SK-N-SH (cell line): ENCODE measurements at regions of chr1 and their contacts with region 1.

Region 1: DNA sequence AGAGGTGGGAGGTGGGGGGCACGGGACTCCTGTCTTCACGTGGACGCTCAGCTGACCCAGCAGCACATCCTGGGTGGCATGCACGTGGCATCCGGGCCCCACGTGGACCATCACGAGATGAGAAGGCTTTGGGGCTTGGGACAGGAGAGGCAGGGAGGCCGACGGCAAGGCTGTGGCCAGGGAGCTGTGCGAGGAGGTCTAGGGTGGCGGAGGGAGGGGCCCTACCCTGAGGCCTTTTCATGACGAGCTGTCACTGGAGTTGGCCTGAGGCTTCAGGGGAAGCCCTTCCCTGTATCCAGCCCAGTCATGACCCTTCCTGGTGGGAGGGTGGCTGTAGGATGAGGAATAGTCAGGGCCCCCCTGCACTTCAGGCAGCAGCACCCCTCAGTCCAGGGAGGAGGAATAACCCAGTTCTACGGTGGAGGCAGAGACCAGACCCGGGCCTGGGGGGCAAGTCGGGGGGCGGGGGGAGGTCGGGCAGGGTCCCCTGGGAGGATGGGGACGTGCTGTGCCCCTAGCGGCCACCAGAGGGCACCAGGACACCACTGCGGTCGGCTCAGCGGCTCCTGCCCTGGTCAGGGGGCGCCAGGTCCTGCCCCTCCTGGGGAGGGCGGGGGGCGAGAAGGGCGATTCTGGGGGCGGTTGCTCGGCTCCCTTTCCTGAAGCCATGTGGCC is 2.0 kb upstream of the PERM1 start:
- DNase-seq: peak; percentile 92
- H3K4me3 ChIP-seq: peak overlapping the region in 1 of 2 experiments; percentile 32; a peak in 1 of 4 replicates
- H3K27ac ChIP-seq: no peak overlapping the region
- H3K4me1 ChIP-seq: peaks cover 0 to 9% of the 10 kb centered on the region in 2 experiments; a peak in 1 of 4 replicates
- H3K27me3 ChIP-seq: peaks cover 30% of the 10 kb centered on the region; the same call in 1 of the 2 replicates
- CTCF ChIP-seq: peak; percentile 76
- EP300 ChIP-seq: no peak
- RAD21 ChIP-seq: peak; percentile 71

Region 2: GRCh38 chr1:912740-913301 is 71.1 kb before region 1 on chr1:
- CTCF ChIA-PET with region 1: no interaction called
- POLR2A ChIA-PET with region 1: no interaction called
- DNase-seq: no peak
- H3K4me3 ChIP-seq: no peak overlapping the region
- H3K27ac ChIP-seq: no peak overlapping the region
- H3K4me1 ChIP-seq: peaks cover 0 to 32% of the 10 kb centered on the region in 2 experiments; a peak in 2 of 4 replicates
- H3K27me3 ChIP-seq: no peaks in the 10 kb centered on the region
- CTCF ChIP-seq: no peak
- EP300 ChIP-seq: no peak
- RAD21 ChIP-seq: no peak

Region 3: GRCh38 chr1:999725-1000356 is 15.9 kb after region 1 on chr1 and contains the start of gene HES4:
- CTCF ChIA-PET with region 1: interaction called, 246 read pairs
- POLR2A ChIA-PET with region 1: no interaction called
- DNase-seq: peak; percentile 73
- H3K4me3 ChIP-seq: peak within 1 kb of the TSS; percentile 33 to 37; a peak in 3 of 4 replicates
- H3K27ac ChIP-seq: peak within 1 kb of the TSS in 1 of 2 experiments; percentile 39; a peak in 2 of 4 replicates
- H3K4me1 ChIP-seq: peaks cover 0 to 27% of the 10 kb centered on the region in 2 experiments; a peak in 1 of 4 replicates
- H3K27me3 ChIP-seq: peaks cover 12% of the 10 kb centered on the region; the same call in 1 of the 2 replicates
- CTCF ChIP-seq: no peak
- EP300 ChIP-seq: no peak
- RAD21 ChIP-seq: no peak
- polyA plus RNA-seq, gene HES4: 4.2 and 4.7 TPM in 2 replicates

Region 4: GRCh38 chr1:1013105-1013921 is 29.4 kb after region 1 on chr1 and contains the start of gene ISG15:
- CTCF ChIA-PET with region 1: interaction called, 30 read pairs
- POLR2A ChIA-PET with region 1: no interaction called
- DNase-seq: no peak
- H3K4me3 ChIP-seq: peak within 1 kb of the TSS; percentile 45 to 52; a peak in 3 of 4 replicates
- H3K27ac ChIP-seq: peak within 1 kb of the TSS in 1 of 2 experiments; percentile 70; a peak in 2 of 4 replicates
- H3K4me1 ChIP-seq: peaks cover 0 to 7% of the 10 kb centered on the region in 2 experiments; a peak in 1 of 4 replicates
- H3K27me3 ChIP-seq: no peaks in the 10 kb centered on the region
- CTCF ChIP-seq: no peak
- EP300 ChIP-seq: no peak
- RAD21 ChIP-seq: no peak
- polyA plus RNA-seq, gene ISG15: 22.9 and 28.6 TPM in 2 replicates

Region 5: GRCh38 chr1:1024771-1025451 is 41.0 kb after region 1 on chr1:
- CTCF ChIA-PET with region 1: interaction called, 17 read pairs
- POLR2A ChIA-PET with region 1: interaction called, 3 read pairs
- DNase-seq: no peak
- H3K4me3 ChIP-seq: no peak overlapping the region
- H3K27ac ChIP-seq: no peak overlapping the region
- H3K4me1 ChIP-seq: peaks cover 0 to 10% of the 10 kb centered on the region in 2 experiments; a peak in 1 of 4 replicates
- H3K27me3 ChIP-seq: no peaks in the 10 kb centered on the region
- CTCF ChIP-seq: no peak
- EP300 ChIP-seq: no peak
- RAD21 ChIP-seq: no peak

Region 6: DNA sequence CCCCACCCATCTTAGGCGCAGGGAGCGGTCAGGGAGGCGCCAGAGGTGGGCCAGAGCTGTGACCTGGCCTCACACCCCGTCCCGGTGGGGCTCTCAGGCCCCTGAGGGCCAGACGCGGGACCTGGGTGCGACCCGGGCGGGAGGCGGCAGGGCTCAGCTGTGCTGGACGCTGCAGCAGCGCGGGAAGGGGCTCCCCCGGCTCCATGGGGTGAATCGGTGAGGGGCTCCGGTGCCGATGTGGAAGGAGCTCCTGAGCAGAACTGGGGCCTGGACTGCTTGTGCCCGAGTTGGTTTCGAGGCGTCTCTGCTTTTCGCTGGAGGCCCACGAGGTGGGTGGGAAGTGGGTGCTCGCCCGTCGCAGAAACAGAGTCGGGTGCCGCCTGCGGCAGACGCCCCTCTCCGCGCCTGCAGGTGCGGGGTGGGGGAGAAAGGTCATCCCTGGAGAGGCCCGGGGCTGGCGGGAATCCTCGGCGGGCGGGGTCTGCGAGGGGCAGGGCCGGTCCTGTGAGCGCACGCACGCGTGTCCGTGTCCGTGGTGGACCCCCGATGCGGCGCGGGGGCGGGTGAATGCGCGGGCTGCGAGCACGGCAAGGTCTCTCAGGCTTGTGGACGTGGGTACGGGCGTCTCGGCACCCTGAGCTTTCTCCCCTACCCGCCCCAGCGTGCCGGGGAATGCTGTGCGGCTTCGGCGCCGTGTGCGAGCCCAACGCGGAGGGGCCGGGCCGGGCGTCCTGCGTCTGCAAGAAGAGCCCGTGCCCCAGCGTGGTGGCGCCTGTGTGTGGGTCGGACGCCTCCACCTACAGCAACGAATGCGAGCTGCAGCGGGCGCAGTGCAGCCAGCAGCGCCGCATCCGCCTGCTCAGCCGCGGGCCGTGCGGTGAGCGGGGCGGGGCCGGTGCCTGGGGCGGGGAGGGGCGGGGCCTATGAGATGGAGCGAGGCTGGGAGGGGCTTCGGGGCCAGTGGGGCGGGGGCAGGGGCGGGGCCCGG is 56.4 kb after region 1 on chr1:
- CTCF ChIA-PET with region 1: interaction called, 40 read pairs
- POLR2A ChIA-PET with region 1: no interaction called
- DNase-seq: peak; percentile 98
- H3K4me3 ChIP-seq: peak overlapping the region; percentile 39 to 41; a peak in 3 of 4 replicates
- H3K27ac ChIP-seq: no peak overlapping the region
- H3K4me1 ChIP-seq: peaks cover 0 to 18% of the 10 kb centered on the region in 2 experiments; a peak in 1 of 4 replicates
- H3K27me3 ChIP-seq: no peaks in the 10 kb centered on the region
- CTCF ChIP-seq: 0 out of 2 replicates have a peak, but pooled peaks have one; percentile 8
- EP300 ChIP-seq: no peak
- RAD21 ChIP-seq: no peak; the same call in 1 of the 2 replicates

Region 7: GRCh38 chr1:1358433-1359261 is 374.7 kb after region 1 on chr1 and contains the start of gene MXRA8:
- CTCF ChIA-PET with region 1: no interaction called
- POLR2A ChIA-PET with region 1: no interaction called
- DNase-seq: no peak
- H3K4me3 ChIP-seq: no peak within 1 kb of the TSS
- H3K27ac ChIP-seq: peak within 1 kb of the TSS; percentile 88 to 98
- H3K4me1 ChIP-seq: peaks cover 20 to 52% of the 10 kb centered on the region in 2 experiments; a peak in 3 of 4 replicates
- H3K27me3 ChIP-seq: no peaks in the 10 kb centered on the region
- CTCF ChIP-seq: no peak
- EP300 ChIP-seq: no peak
- RAD21 ChIP-seq: no peak
- polyA plus RNA-seq, gene MXRA8: 2.5 and 3.8 TPM in 2 replicates